Activated CD4-positive, alpha-beta memory T cell treated with anti-CD3 and anti-CD28 coated beads, Interleukin-2, amount 10 ng/mL, durations not matched to agents 7 days and 5 days (primary cell): ENCODE measurements at regions of chr3 and their contacts with region 1.

Region 1: GRCh38 chr3:186882881-186883685 is 40.6 kb downstream of the ADIPOQ start:
- DNase-seq: peak; percentile 60
- H3K4me3 Mint-ChIP-seq: peak overlapping the region; percentile 33
- H3K27ac Mint-ChIP-seq: peak overlapping the region; percentile 85
- H3K4me1 Mint-ChIP-seq: peaks cover 52% of the 10 kb centered on the region
- H3K27me3 Mint-ChIP-seq: no peaks in the 10 kb centered on the region

Region 2: GRCh38 chr3:186854954-186855353 is 28.1 kb before region 1 on chr3:
- CTCF ChIA-PET with region 1: interaction called, 10 read pairs
- POLR2A ChIA-PET with region 1: interaction called, 9 read pairs
- DNase-seq: no peak
- H3K4me3 Mint-ChIP-seq: no peak overlapping the region
- H3K27ac Mint-ChIP-seq: no peak overlapping the region
- H3K4me1 Mint-ChIP-seq: peaks cover 15% of the 10 kb centered on the region
- H3K27me3 Mint-ChIP-seq: no peaks in the 10 kb centered on the region

Region 3: DNA sequence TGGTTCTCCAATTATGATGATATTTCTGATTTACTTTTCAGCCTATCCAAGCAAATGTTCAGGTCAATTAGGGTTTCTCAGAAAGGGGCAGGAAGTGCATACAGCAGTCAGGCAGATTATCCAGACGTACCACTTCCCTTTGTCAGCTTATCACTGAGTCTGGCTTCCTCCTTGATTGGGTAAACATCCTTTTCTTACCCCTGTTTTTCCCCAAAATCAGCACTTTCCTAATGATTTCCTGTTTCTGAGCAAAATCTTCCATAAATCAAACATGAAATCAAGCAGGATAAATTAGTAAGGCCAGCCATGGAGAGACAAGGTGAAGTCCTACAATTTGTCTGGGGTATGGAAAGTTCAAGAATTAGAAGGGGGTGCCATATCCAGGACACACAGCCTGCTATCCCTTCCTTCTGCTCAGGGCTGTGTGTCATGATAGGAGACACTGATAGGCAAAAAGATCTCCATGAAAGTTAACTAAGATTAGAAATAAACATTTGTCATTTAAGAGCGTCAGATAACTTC is 11.6 kb before region 1 on chr3:
- CTCF ChIA-PET with region 1: no interaction called
- POLR2A ChIA-PET with region 1: interaction called, 14 read pairs
- DNase-seq: no peak
- H3K4me3 Mint-ChIP-seq: no peak overlapping the region
- H3K27ac Mint-ChIP-seq: peak overlapping the region; percentile 70
- H3K4me1 Mint-ChIP-seq: peaks cover 38% of the 10 kb centered on the region
- H3K27me3 Mint-ChIP-seq: no peaks in the 10 kb centered on the region

Region 4: DNA sequence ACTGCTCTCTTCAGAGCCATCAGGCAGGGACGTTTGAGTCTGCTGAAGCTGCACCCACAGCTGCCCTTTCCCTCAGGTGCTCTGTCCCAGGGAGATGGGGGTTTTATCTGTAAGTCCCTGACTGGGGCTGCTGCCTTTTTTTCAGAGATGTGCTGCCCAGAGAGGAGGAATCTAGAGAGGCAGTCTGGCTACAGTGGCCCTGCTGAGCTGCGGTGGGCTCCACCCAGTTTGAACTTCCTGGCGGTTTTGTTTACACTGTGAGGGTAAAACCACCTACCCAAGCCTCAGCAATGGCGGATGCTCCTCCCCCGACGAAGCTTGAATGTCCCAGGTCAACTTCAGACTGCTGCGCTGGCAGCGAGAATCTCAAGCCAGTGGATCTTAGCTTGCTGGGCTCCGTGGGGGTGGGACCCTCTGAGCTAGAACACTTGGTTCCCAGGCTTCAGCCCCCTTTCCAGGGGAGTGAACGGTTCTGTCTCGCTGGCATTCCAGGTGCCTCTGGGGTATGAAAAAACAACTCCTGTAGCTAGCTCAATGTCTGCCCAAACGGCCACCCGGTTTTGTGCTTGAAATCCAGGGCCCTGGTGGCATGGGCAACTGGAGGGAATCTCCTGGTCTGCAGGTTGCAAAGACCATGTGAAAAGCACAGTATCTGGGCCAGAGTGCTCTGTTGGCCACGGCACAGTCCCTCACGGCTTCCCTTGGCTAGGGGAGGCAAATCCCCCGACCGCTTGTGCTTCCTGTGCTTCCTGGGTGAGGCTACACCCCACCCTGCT is 26.2 kb after region 1 on chr3:
- CTCF ChIA-PET with region 1: interaction called, 14 read pairs
- POLR2A ChIA-PET with region 1: interaction called, 28 read pairs
- DNase-seq: peak; percentile 91
- H3K4me3 Mint-ChIP-seq: peak overlapping the region; percentile 42
- H3K27ac Mint-ChIP-seq: peak overlapping the region; percentile 94
- H3K4me1 Mint-ChIP-seq: peaks cover 44% of the 10 kb centered on the region
- H3K27me3 Mint-ChIP-seq: no peaks in the 10 kb centered on the region